B cell (primary cell): ENCODE measurements at regions of chr17 and their contacts with region 1.

Region 1: GRCh38 chr17:64025732-64026294 is 5.4 kb upstream of the ICAM2 start:
- DNase-seq: peak; percentile 94
- ATAC-seq: peak; percentile 90
- H3K4me3 ChIP-seq: peak overlapping the region in 4 of 5 experiments; percentile 4 to 47 (median 22)
- H3K4me3 Mint-ChIP-seq: peak overlapping the region; percentile 80
- H3K27ac ChIP-seq: peak overlapping the region; percentile 52 to 67
- H3K27ac Mint-ChIP-seq: peak overlapping the region; percentile 57
- H3K4me1 ChIP-seq: peaks cover 26 to 30% of the 10 kb centered on the region in 2 donors
- H3K4me1 Mint-ChIP-seq: peaks cover 37% of the 10 kb centered on the region
- H3K27me3 ChIP-seq: no peaks in the 10 kb centered on the region
- H3K27me3 Mint-ChIP-seq: no peaks in the 10 kb centered on the region
- CTCF ChIP-seq: peak; percentile 94

Region 2: GRCh38 chr17:63911657-63912426 is 114.0 kb before region 1 on chr17:
- CTCF ChIA-PET with region 1: interaction called, 164 read pairs
- POLR2A ChIA-PET with region 1: interaction called, 6 read pairs
- intact Hi-C with region 1: no loop called
- DNase-seq: peak; percentile 77
- ATAC-seq: peak; percentile 55
- H3K4me3 ChIP-seq: no peak overlapping the region
- H3K4me3 Mint-ChIP-seq: no peak overlapping the region
- H3K27ac ChIP-seq: no peak overlapping the region
- H3K27ac Mint-ChIP-seq: peak overlapping the region; percentile 50
- H3K4me1 ChIP-seq: peaks cover 28 to 41% of the 10 kb centered on the region in 2 donors
- H3K4me1 Mint-ChIP-seq: peaks cover 41% of the 10 kb centered on the region
- H3K27me3 ChIP-seq: peaks cover 0 to 5% (median 0%) of the 10 kb centered on the region in 4 experiments
- H3K27me3 Mint-ChIP-seq: peaks cover 8% of the 10 kb centered on the region
- CTCF ChIP-seq: peak; percentile 82

Region 3: DNA sequence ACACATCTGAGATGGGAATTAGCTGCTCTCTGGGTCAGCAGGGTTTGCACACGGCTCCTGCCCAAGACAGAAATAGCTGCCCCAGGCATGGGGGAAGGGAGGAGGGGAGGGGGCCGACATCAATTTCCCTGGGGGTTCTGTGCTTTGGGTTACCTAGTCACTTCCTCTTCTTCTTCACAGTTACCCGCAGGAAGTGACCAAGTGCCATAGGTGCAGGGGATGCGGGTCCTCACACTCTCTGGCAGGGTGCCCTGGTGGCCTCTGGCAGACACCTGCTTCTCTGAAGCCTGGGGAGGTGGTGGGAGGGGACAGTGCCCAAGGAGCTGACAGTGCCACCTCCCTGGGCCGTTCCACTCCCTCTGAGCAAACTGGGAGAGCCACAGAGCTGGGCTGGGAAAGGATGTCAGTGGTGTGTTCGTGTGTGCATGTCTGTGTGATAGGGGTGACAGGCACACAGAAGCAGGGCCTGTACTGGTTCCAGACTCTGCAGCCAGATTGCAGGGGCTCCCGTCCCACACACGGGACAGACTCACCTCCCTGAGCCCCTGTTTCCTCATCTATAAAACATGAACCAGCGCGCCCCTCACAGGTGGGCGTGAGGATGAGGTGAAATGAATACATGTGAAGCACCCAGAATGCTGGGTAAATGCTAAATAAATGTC is 71.3 kb before region 1 on chr17:
- CTCF ChIA-PET with region 1: interaction called, 214 read pairs
- POLR2A ChIA-PET with region 1: interaction called, 6 read pairs
- intact Hi-C with region 1: loop called (anchors 1 kb)
- DNase-seq: peak; percentile 81
- ATAC-seq: peak; percentile 87
- H3K4me3 ChIP-seq: peak overlapping the region in 1 of 5 experiments; percentile 15
- H3K4me3 Mint-ChIP-seq: peak overlapping the region; percentile 81
- H3K27ac ChIP-seq: peak overlapping the region; percentile 79 to 82
- H3K27ac Mint-ChIP-seq: peak overlapping the region; percentile 96
- H3K4me1 ChIP-seq: peaks cover 36 to 58% of the 10 kb centered on the region in 2 donors
- H3K4me1 Mint-ChIP-seq: peaks cover 30% of the 10 kb centered on the region
- H3K27me3 ChIP-seq: no peaks in the 10 kb centered on the region
- H3K27me3 Mint-ChIP-seq: no peaks in the 10 kb centered on the region
- CTCF ChIP-seq: no peak

Region 4: DNA sequence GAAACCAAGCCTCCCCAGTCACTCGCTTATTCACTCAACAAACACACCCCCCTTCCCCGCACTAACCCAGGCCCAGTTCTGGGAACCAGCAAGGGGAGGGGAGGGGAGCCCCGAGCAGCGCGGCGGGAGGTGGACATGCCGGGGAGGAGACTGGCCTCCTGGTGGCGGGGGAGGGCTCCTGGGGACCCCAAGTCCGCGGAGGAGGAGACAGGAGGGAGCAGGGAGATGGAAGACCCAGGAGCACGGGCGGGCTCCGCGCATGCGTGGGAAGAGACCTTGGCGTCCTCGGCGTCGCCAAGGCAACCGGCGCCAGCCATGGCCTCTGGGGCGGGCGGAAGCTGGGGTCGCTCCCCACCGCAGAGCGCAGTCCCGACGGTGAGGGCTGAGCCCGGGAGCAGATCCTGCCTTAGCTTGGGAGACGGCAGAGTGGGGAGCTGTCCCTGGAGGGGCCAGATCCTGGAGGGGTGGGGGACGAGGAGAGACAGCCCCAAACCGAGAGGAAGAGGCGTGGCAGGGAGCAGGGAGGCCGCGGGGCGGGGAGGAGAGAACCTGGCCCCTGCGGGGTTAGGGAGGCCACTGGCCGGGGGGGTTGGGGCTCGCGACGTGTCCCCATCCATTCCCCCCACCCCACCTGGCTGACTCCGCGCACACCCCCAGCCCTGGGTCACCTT is 27.6 kb before region 1 on chr17 and contains the start of gene PRR29:
- CTCF ChIA-PET with region 1: interaction called, 89 read pairs
- POLR2A ChIA-PET with region 1: interaction called, 3 read pairs
- intact Hi-C with region 1: no loop called
- DNase-seq: peak; percentile 80
- ATAC-seq: peak; percentile 72
- H3K4me3 ChIP-seq: peak within 1 kb of the TSS; percentile 28 to 68 (median 63)
- H3K4me3 Mint-ChIP-seq: peak within 1 kb of the TSS; percentile 91
- H3K27ac ChIP-seq: no peak within 1 kb of the TSS
- H3K27ac Mint-ChIP-seq: peak within 1 kb of the TSS; percentile 63
- H3K4me1 ChIP-seq: peaks cover 27 to 32% of the 10 kb centered on the region in 2 donors
- H3K4me1 Mint-ChIP-seq: peaks cover 33% of the 10 kb centered on the region
- H3K27me3 ChIP-seq: peaks cover 0 to 20% (median 5%) of the 10 kb centered on the region in 4 experiments
- H3K27me3 Mint-ChIP-seq: peaks cover 10% of the 10 kb centered on the region
- CTCF ChIP-seq: no peak
- total RNA-seq, gene PRR29: not detected in 2 replicates

Region 5: GRCh38 chr17:64045176-64045575 is 19.4 kb after region 1 on chr17:
- CTCF ChIA-PET with region 1: interaction called, 20 read pairs
- POLR2A ChIA-PET with region 1: interaction called, 6 read pairs
- intact Hi-C with region 1: no loop called
- DNase-seq: no peak
- ATAC-seq: no peak
- H3K4me3 ChIP-seq: no peak overlapping the region
- H3K4me3 Mint-ChIP-seq: no peak overlapping the region
- H3K27ac ChIP-seq: no peak overlapping the region
- H3K27ac Mint-ChIP-seq: no peak overlapping the region
- H3K4me1 ChIP-seq: no peaks in the 10 kb centered on the region
- H3K4me1 Mint-ChIP-seq: no peaks in the 10 kb centered on the region
- H3K27me3 ChIP-seq: no peaks in the 10 kb centered on the region
- H3K27me3 Mint-ChIP-seq: no peaks in the 10 kb centered on the region
- CTCF ChIP-seq: no peak

Region 6: DNA sequence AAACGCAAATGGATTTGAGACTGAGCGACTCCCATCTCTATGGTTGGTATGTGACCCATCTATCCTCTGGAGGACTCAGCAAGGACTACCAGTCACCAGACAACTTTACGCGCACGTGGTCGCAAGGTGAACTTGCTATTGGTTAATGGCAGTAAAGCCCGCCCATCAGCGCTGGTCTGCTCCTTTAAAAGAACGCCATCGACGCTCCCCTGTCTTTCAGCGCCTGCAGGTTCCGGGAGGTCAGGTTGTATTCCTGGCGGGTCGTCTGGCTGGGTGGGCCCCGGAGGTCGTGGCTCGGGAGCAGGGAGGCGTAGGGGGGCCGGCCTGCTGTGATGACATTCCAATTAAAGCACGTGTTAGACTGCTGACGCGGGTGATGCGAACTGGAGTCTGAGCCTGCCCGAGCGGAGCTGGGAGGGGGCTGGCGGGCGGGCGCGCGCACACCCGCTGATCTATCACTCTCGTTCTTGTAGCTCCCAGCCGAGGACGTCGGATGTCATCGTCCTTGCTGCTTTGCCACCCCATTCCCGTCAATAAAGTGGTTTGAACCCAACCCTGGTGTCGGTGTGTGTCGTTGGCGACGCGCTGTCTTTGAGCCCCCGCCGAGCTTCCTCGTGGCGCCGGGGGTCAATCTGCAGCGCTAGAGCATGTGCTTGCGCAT is 120.1 kb after region 1 on chr17:
- CTCF ChIA-PET with region 1: interaction called, 51 read pairs
- POLR2A ChIA-PET with region 1: interaction called, 9 read pairs
- intact Hi-C with region 1: no loop called
- DNase-seq: peak; percentile 98
- ATAC-seq: peak; percentile 93
- H3K4me3 ChIP-seq: peak overlapping the region; percentile 77 to 95 (median 92)
- H3K4me3 Mint-ChIP-seq: no peak overlapping the region
- H3K27ac ChIP-seq: peak overlapping the region; percentile 86 to 88
- H3K27ac Mint-ChIP-seq: no peak overlapping the region
- H3K4me1 ChIP-seq: peaks cover 14 to 18% of the 10 kb centered on the region in 2 donors
- H3K4me1 Mint-ChIP-seq: peaks cover 15% of the 10 kb centered on the region
- H3K27me3 ChIP-seq: no peaks in the 10 kb centered on the region
- H3K27me3 Mint-ChIP-seq: no peaks in the 10 kb centered on the region
- CTCF ChIP-seq: no peak

Region 7: GRCh38 chr17:64183815-64184214 is 158.0 kb after region 1 on chr17:
- CTCF ChIA-PET with region 1: no interaction called
- POLR2A ChIA-PET with region 1: no interaction called
- intact Hi-C with region 1: no loop called
- DNase-seq: no peak
- ATAC-seq: no peak
- H3K4me3 ChIP-seq: no peak overlapping the region
- H3K4me3 Mint-ChIP-seq: no peak overlapping the region
- H3K27ac ChIP-seq: no peak overlapping the region
- H3K27ac Mint-ChIP-seq: no peak overlapping the region
- H3K4me1 ChIP-seq: no peaks in the 10 kb centered on the region
- H3K4me1 Mint-ChIP-seq: no peaks in the 10 kb centered on the region
- H3K27me3 ChIP-seq: no peaks in the 10 kb centered on the region
- H3K27me3 Mint-ChIP-seq: no peaks in the 10 kb centered on the region
- CTCF ChIP-seq: no peak